CD8-positive, alpha-beta T cell (primary cell): ENCODE measurements at regions of chr12 and their contacts with region 1.

Region 1: GRCh38 chr12:53327435-53328042 is 6.1 kb upstream of the AAAS start:
- DNase-seq: peak in 1 of 9 experiments; percentile 33
- ATAC-seq: no peak
- H3K4me3 ChIP-seq: no peak overlapping the region
- H3K4me3 Mint-ChIP-seq: no peak overlapping the region
- H3K27ac ChIP-seq: no peak overlapping the region
- H3K27ac Mint-ChIP-seq: no peak overlapping the region
- H3K4me1 ChIP-seq: peaks cover 15% of the 10 kb centered on the region
- H3K4me1 Mint-ChIP-seq: peaks cover 20% of the 10 kb centered on the region
- H3K27me3 ChIP-seq: no peaks in the 10 kb centered on the region
- H3K27me3 Mint-ChIP-seq: peaks cover 2% of the 10 kb centered on the region
- CTCF ChIP-seq: no peak

Region 2: GRCh38 chr12:53427905-53428594 is 100.5 kb after region 1 on chr12:
- CTCF ChIA-PET with region 1: interaction called, 24 read pairs
- POLR2A ChIA-PET with region 1: no interaction called
- intact Hi-C with region 1: no loop called
- DNase-seq: peak in 1 of 9 experiments; percentile 13
- ATAC-seq: no peak
- H3K4me3 ChIP-seq: no peak overlapping the region
- H3K4me3 Mint-ChIP-seq: no peak overlapping the region
- H3K27ac ChIP-seq: no peak overlapping the region
- H3K27ac Mint-ChIP-seq: no peak overlapping the region
- H3K4me1 ChIP-seq: no peaks in the 10 kb centered on the region
- H3K4me1 Mint-ChIP-seq: no peaks in the 10 kb centered on the region
- H3K27me3 ChIP-seq: no peaks in the 10 kb centered on the region
- H3K27me3 Mint-ChIP-seq: no peaks in the 10 kb centered on the region
- CTCF ChIP-seq: no peak